ENCODE measurements at regions of chr6 and their contacts with region 1.

Region 1: DNA sequence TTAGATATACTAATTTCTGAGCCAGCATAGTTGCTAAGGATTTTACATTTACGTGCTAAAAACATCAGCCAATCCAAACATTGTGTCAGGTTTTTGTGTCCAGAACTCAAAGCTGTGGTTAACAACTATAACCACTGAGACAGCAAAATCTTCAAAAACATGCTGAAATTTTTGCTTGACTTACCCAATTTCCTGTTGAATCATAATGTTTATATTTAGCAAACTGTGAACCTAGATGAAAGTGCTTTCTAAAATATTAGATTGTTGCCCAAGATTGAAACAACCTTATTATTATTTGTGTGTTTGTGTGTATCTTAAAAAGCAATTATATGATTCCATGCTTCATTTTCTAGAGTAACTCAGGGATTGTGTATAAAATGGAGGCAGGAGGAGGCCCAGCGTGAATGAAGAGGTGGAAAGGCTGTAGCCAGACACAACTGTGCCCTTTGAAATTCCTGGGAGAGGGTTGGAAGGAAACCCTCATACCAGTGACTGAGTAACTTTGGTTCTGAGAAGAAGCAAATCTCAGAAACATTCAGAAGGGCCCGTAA is 48.0 kb downstream of the ARMC2 start:
- DNase-seq: no peak
- ATAC-seq: no peak
- H3K4me3 Mint-ChIP-seq: no peak overlapping the region
- H3K27ac Mint-ChIP-seq: no peak overlapping the region
- H3K4me1 Mint-ChIP-seq: peaks cover 20% of the 10 kb centered on the region
- H3K27me3 Mint-ChIP-seq: no peaks in the 10 kb centered on the region
- CTCF ChIP-seq: no peak

Region 2: DNA sequence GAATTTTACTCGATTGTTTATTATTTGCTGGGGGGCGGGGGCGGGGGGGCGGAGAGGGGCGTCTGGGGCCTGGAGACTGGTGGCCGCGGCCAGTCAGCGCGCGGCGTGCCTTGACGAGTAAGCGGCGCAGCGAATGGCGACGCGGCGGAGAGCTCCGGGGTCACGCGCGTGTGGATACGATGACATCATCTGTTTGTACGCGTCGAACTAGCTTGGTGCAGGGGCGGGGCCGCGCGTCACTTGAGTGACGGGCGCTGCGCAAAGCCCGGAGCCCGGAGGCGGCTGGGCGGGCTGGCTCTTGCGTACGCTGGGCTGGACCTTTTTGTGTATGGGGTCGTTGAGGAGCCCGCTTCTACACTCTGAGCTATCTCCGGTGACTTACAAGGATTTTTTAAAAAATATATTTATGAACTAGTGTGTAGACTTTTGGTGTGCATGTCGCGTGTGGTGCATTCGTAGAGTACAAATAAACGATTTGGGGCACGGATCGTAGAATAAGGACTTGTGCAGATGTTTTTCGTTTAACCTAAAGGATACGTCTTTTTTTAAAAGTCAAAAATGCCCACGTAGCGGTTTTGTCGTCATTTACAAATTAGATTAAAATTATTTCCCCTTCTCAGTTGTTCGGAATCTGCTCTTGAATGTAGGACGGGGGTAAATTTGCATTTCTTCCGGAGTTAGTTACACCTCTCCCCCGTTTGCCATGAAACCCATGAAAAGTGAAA is 337.7 kb before region 1 on chr6:
- CTCF ChIA-PET with region 1: interaction called, 13 read pairs
- POLR2A ChIA-PET with region 1: no interaction called
- DNase-seq: peak; percentile 94
- ATAC-seq: peak; percentile 40
- H3K4me3 Mint-ChIP-seq: peak overlapping the region; percentile 93
- H3K27ac Mint-ChIP-seq: peak overlapping the region; percentile 93
- H3K4me1 Mint-ChIP-seq: peaks cover 19% of the 10 kb centered on the region
- H3K27me3 Mint-ChIP-seq: peaks cover 48% of the 10 kb centered on the region
- CTCF ChIP-seq: no peak

Region 3: DNA sequence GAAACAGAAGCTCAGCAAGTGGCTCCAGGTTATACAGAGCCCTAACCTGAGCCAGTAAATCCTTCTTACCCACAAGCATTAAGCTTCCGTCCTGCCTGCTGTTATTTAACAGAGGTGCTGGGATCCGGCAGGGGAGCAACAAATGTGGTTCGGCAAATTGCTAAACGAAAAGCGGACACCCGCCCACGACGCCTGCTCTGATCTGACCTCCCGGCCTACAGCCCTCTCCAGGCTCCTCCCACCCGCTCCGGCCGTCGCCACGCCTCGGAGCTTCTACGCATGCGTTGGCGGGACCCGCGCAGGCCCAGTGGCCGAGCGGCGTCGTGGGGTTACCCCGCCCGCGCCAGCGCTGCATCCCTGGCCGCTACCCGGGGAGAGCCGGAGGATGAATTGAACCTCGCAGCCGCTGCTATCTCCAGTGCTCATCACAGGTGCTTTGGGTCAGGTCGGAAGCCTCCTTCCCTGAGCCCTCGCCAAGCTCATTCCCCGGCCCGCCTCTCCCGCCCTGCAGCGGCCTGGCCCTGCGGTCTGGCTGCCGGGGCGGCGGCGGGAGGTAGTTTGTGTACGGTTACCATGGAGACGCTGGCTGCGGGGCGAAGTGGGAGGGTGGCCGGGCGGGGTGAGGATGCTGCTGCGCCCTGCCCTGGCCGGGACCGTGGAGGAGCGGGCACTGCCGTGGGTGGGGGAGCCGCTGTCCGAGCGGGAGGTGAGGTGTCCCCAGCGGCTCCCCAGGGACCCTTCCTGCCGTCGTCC is 47.9 kb before region 1 on chr6 and contains the start of gene ARMC2:
- CTCF ChIA-PET with region 1: interaction called, 12 read pairs
- POLR2A ChIA-PET with region 1: no interaction called
- DNase-seq: peak; percentile 96
- ATAC-seq: peak; percentile 97
- H3K4me3 Mint-ChIP-seq: peak within 1 kb of the TSS; percentile 76
- H3K27ac Mint-ChIP-seq: peak within 1 kb of the TSS; percentile 32; the same call in 1 of the 2 replicates
- H3K4me1 Mint-ChIP-seq: peaks cover 13% of the 10 kb centered on the region
- H3K27me3 Mint-ChIP-seq: no peaks in the 10 kb centered on the region
- CTCF ChIP-seq: no peak
- total RNA-seq, gene ARMC2: 4.6 to 5.2 TPM (median 4.7 TPM) in 3 replicates

Region 4: GRCh38 chr6:108883172-108883571 is 13.0 kb before region 1 on chr6:
- CTCF ChIA-PET with region 1: interaction called, 10 read pairs
- POLR2A ChIA-PET with region 1: no interaction called
- DNase-seq: no peak
- ATAC-seq: no peak
- H3K4me3 Mint-ChIP-seq: no peak overlapping the region
- H3K27ac Mint-ChIP-seq: no peak overlapping the region
- H3K4me1 Mint-ChIP-seq: 0 out of 2 replicates have a peak, but pooled peaks cover 5% of the 10 kb centered on the region
- H3K27me3 Mint-ChIP-seq: no peaks in the 10 kb centered on the region
- CTCF ChIP-seq: no peak

Region 5: DNA sequence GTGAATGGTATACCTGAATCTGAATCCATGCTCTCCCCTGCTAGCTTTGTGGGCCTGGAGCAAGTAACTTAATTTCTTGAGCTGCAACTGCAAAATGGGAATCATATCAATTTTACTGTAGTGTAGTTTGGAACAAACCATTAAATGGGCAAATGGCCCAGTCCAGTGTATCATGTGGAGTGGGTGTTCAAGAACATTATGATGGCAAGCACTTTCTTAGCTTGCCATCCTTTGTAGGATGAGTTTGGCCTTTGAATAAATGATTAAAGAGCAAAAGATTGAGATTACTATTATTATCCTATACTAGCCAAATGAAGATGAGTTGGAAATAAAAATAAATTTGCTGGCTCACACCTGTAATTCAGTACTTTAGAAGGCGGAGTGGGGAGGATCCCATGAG is 78.0 kb after region 1 on chr6:
- CTCF ChIA-PET with region 1: no interaction called
- POLR2A ChIA-PET with region 1: no interaction called
- DNase-seq: no peak
- ATAC-seq: no peak
- H3K4me3 Mint-ChIP-seq: no peak overlapping the region
- H3K27ac Mint-ChIP-seq: no peak overlapping the region
- H3K4me1 Mint-ChIP-seq: no peaks in the 10 kb centered on the region
- H3K27me3 Mint-ChIP-seq: no peaks in the 10 kb centered on the region
- CTCF ChIP-seq: no peak